WTC11 (cell line): ENCODE measurements at regions of chr13 and their contacts with region 1.

Region 1: DNA sequence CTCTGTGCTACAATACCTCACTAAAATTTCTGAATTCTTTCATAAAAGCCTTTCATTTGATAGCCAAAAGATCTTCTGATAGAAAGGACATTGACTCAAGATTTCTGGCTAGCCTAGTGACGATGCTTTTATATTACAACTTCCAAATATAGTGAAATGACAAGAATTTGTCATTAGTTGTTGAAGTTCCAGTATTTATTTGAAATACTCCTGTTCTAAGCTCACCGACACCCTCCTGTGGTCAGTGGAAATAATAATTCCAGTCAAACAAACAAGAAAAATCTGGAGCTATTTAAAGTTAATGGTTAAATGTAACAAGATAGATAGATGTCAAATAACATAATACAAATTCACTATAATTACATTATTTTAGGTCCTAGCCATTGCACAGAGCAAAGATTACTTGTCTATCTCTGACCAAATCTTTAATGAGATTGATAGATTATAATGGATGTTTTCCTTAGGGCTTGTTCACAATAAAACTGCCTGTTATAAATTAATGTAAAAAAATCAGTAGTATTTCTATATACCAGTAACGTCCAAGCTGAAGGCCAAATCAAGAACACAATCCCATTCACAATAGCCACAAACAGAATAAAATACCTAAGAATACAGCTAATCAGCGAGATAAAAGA is 195.5 kb downstream of the RGCC start:
- DNase-seq: no peak
- ATAC-seq: no peak
- H3K4me3 Mint-ChIP-seq: no peak overlapping the region
- H3K27ac Mint-ChIP-seq: no peak overlapping the region
- H3K4me1 Mint-ChIP-seq: peaks cover 12% of the 10 kb centered on the region
- H3K27me3 Mint-ChIP-seq: no peaks in the 10 kb centered on the region
- CTCF ChIP-seq: no peak

Region 2: DNA sequence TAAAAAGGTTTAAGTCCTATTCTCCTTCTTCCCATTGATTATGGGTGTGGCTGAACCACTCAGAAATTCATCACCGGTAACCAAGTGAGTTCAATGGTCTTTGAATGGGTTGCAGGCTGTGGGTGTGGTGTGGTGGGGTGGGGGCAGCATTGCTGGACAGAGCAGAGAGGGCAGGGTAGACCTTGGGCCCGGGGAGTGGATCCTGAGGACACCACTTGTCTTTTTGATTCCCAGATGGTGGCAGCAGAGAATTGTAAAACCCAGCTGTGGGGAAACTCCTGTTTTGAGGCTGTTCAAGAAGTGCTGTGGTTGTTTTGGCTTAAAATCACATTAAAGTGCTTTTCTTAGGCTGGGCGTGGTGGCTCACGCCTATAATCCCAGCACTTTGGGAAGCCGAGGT is 241.3 kb before region 1 on chr13:
- CTCF ChIA-PET with region 1: interaction called, 19 read pairs
- POLR2A ChIA-PET with region 1: no interaction called
- DNase-seq: peak; percentile 35
- ATAC-seq: peak; percentile 91
- H3K4me3 Mint-ChIP-seq: no peak overlapping the region
- H3K27ac Mint-ChIP-seq: no peak overlapping the region
- H3K4me1 Mint-ChIP-seq: peaks cover 2% of the 10 kb centered on the region; the same call in 1 of the 2 replicates
- H3K27me3 Mint-ChIP-seq: no peaks in the 10 kb centered on the region
- CTCF ChIP-seq: no peak

Region 3: GRCh38 chr13:41492404-41493260 is 160.2 kb before region 1 on chr13:
- CTCF ChIA-PET with region 1: no interaction called
- POLR2A ChIA-PET with region 1: no interaction called
- DNase-seq: no peak
- ATAC-seq: no peak
- H3K4me3 Mint-ChIP-seq: no peak overlapping the region
- H3K27ac Mint-ChIP-seq: no peak overlapping the region
- H3K4me1 Mint-ChIP-seq: peaks cover 4% of the 10 kb centered on the region; the same call in 1 of the 2 replicates
- H3K27me3 Mint-ChIP-seq: no peaks in the 10 kb centered on the region; the same call in 1 of the 2 replicates
- CTCF ChIP-seq: no peak

Region 4: GRCh38 chr13:41613984-41614661 is 38.7 kb before region 1 on chr13:
- CTCF ChIA-PET with region 1: no interaction called
- POLR2A ChIA-PET with region 1: no interaction called
- DNase-seq: no peak
- ATAC-seq: no peak
- H3K4me3 Mint-ChIP-seq: no peak overlapping the region
- H3K27ac Mint-ChIP-seq: no peak overlapping the region
- H3K4me1 Mint-ChIP-seq: no peaks in the 10 kb centered on the region
- H3K27me3 Mint-ChIP-seq: no peaks in the 10 kb centered on the region
- CTCF ChIP-seq: no peak

Region 5: GRCh38 chr13:41627425-41627824 is 25.4 kb before region 1 on chr13:
- CTCF ChIA-PET with region 1: no interaction called
- POLR2A ChIA-PET with region 1: no interaction called
- DNase-seq: no peak
- ATAC-seq: no peak
- H3K4me3 Mint-ChIP-seq: no peak overlapping the region
- H3K27ac Mint-ChIP-seq: no peak overlapping the region; the same call in 1 of the 2 replicates
- H3K4me1 Mint-ChIP-seq: no peaks in the 10 kb centered on the region
- H3K27me3 Mint-ChIP-seq: no peaks in the 10 kb centered on the region
- CTCF ChIP-seq: no peak

Region 6: GRCh38 chr13:41751277-41751676 is 98.4 kb after region 1 on chr13:
- CTCF ChIA-PET with region 1: no interaction called
- POLR2A ChIA-PET with region 1: no interaction called
- DNase-seq: no peak
- ATAC-seq: no peak
- H3K4me3 Mint-ChIP-seq: no peak overlapping the region
- H3K27ac Mint-ChIP-seq: no peak overlapping the region
- H3K4me1 Mint-ChIP-seq: no peaks in the 10 kb centered on the region
- H3K27me3 Mint-ChIP-seq: no peaks in the 10 kb centered on the region
- CTCF ChIP-seq: no peak